CD8-positive, alpha-beta T cell (primary cell): ENCODE measurements at regions of chr11 and their contacts with region 1.

Region 1: GRCh38 chr11:58530236-58530635 is 22.3 kb upstream of the OR5B21 start:
- DNase-seq: peak; percentile 22 to 76 (median 59)
- ATAC-seq: peak; percentile 79
- H3K4me3 ChIP-seq: peak overlapping the region in 1 of 2 experiments; percentile 31
- H3K4me3 Mint-ChIP-seq: peak overlapping the region; percentile 47
- H3K27ac ChIP-seq: peak overlapping the region; percentile 43 to 45
- H3K27ac Mint-ChIP-seq: peak overlapping the region; percentile 93
- H3K4me1 ChIP-seq: peaks cover 42% of the 10 kb centered on the region
- H3K4me1 Mint-ChIP-seq: peaks cover 71% of the 10 kb centered on the region
- H3K27me3 ChIP-seq: no peaks in the 10 kb centered on the region
- H3K27me3 Mint-ChIP-seq: no peaks in the 10 kb centered on the region
- CTCF ChIP-seq: no peak

Region 2: DNA sequence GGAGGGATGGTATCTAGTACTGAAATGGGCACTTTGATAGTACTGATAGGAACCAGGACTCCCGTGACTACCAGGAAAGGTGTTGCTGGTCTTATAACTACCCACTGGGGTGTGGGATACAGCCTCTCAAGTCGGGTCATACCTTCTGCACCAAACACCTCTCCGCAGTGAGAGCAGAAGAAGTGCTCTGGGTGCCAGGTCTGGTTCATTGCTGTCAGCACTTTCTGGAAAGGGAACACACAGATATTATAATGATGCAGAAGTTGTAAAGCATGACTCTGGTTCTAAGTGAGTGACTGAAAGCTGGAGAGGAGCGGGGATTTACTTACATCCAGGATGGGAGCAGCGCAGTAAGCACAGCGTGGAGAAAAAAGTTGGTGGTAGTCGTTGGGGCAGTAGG is 19.4 kb after region 1 on chr11:
- CTCF ChIA-PET with region 1: interaction called, 10 read pairs
- POLR2A ChIA-PET with region 1: interaction called, 3 read pairs
- intact Hi-C with region 1: loop called in 1 of 2 experiments (anchors 2 kb)
- DNase-seq: no peak
- ATAC-seq: no peak
- H3K4me3 ChIP-seq: no peak overlapping the region
- H3K4me3 Mint-ChIP-seq: no peak overlapping the region
- H3K27ac ChIP-seq: no peak overlapping the region
- H3K27ac Mint-ChIP-seq: no peak overlapping the region
- H3K4me1 ChIP-seq: no peaks in the 10 kb centered on the region
- H3K4me1 Mint-ChIP-seq: peaks cover 22% of the 10 kb centered on the region
- H3K27me3 ChIP-seq: no peaks in the 10 kb centered on the region
- H3K27me3 Mint-ChIP-seq: no peaks in the 10 kb centered on the region
- CTCF ChIP-seq: no peak